PC-9 (cell line): ENCODE measurements at regions of chr11 and their contacts with region 1.

Region 1: GRCh38 chr11:64846998-64847666 is 2.7 kb upstream of the CDC42BPG start:
- DNase-seq: peak; percentile 83 to 95
- H3K4me3 ChIP-seq: no peak overlapping the region
- H3K27ac ChIP-seq: no peak overlapping the region
- H3K4me1 ChIP-seq: peaks cover 70% of the 10 kb centered on the region
- H3K27me3 ChIP-seq: no peaks in the 10 kb centered on the region
- CTCF ChIP-seq: peak; percentile 98

Region 2: GRCh38 chr11:64358907-64359711 is 488.0 kb before region 1 on chr11 and contains the start of gene RPS6KA4:
- CTCF ChIA-PET with region 1: no interaction called
- POLR2A ChIA-PET with region 1: no interaction called
- intact Hi-C with region 1: loop called (anchors 2 kb)
- DNase-seq: peak; percentile 54 to 79
- H3K4me3 ChIP-seq: peak within 1 kb of the TSS; percentile 91
- H3K27ac ChIP-seq: peak within 1 kb of the TSS; percentile 59
- H3K4me1 ChIP-seq: peaks cover 42% of the 10 kb centered on the region
- H3K27me3 ChIP-seq: no peaks in the 10 kb centered on the region
- CTCF ChIP-seq: no peak
- total RNA-seq, gene RPS6KA4: 60.6 and 64.3 TPM in 2 replicates

Region 3: GRCh38 chr11:64803163-64803845 is 43.8 kb before region 1 on chr11 and contains the start of gene MAP4K2:
- CTCF ChIA-PET with region 1: interaction called, 5 read pairs
- POLR2A ChIA-PET with region 1: no interaction called
- intact Hi-C with region 1: loop called (anchors 1 kb)
- DNase-seq: peak; percentile 72 to 93
- H3K4me3 ChIP-seq: peak within 1 kb of the TSS; percentile 76
- H3K27ac ChIP-seq: peak within 1 kb of the TSS; percentile 69
- H3K4me1 ChIP-seq: peaks cover 20% of the 10 kb centered on the region
- H3K27me3 ChIP-seq: no peaks in the 10 kb centered on the region
- CTCF ChIP-seq: peak; percentile 47; the same call in 1 of the 2 replicates
- total RNA-seq, gene MAP4K2: 32.6 and 34.3 TPM in 2 replicates

Region 4: GRCh38 chr11:64887757-64888405 is 40.7 kb after region 1 on chr11:
- CTCF ChIA-PET with region 1: interaction called, 13 read pairs
- POLR2A ChIA-PET with region 1: interaction called, 3 read pairs
- intact Hi-C with region 1: no loop called
- DNase-seq: peak in 1 of 2 experiments; percentile 87
- H3K4me3 ChIP-seq: peak overlapping the region; percentile 41; the same call in 1 of the 2 replicates
- H3K27ac ChIP-seq: no peak overlapping the region
- H3K4me1 ChIP-seq: peaks cover 24% of the 10 kb centered on the region
- H3K27me3 ChIP-seq: no peaks in the 10 kb centered on the region
- CTCF ChIP-seq: peak; percentile 99

Region 5: GRCh38 chr11:64947208-64947814 is 100.2 kb after region 1 on chr11:
- CTCF ChIA-PET with region 1: no interaction called
- POLR2A ChIA-PET with region 1: no interaction called
- intact Hi-C with region 1: no loop called
- DNase-seq: no peak
- H3K4me3 ChIP-seq: no peak overlapping the region
- H3K27ac ChIP-seq: no peak overlapping the region
- H3K4me1 ChIP-seq: no peaks in the 10 kb centered on the region
- H3K27me3 ChIP-seq: no peaks in the 10 kb centered on the region
- CTCF ChIP-seq: no peak

Region 6: GRCh38 chr11:65013692-65014145 is 166.6 kb after region 1 on chr11:
- CTCF ChIA-PET with region 1: interaction called, 3 read pairs
- POLR2A ChIA-PET with region 1: interaction called, 3 read pairs
- intact Hi-C with region 1: loop called (anchors 2 kb)
- DNase-seq: peak in 1 of 2 experiments; percentile 80
- H3K4me3 ChIP-seq: peak overlapping the region; percentile 76
- H3K27ac ChIP-seq: peak overlapping the region; percentile 71
- H3K4me1 ChIP-seq: peaks cover 14% of the 10 kb centered on the region
- H3K27me3 ChIP-seq: no peaks in the 10 kb centered on the region
- CTCF ChIP-seq: peak; percentile 75

Region 7: GRCh38 chr11:65180877-65181568 is 333.9 kb after region 1 on chr11:
- CTCF ChIA-PET with region 1: no interaction called
- POLR2A ChIA-PET with region 1: no interaction called
- intact Hi-C with region 1: loop called (anchors 5 kb)
- DNase-seq: peak; percentile 70 to 84
- H3K4me3 ChIP-seq: peak overlapping the region; percentile 97
- H3K27ac ChIP-seq: peak overlapping the region; percentile 44
- H3K4me1 ChIP-seq: peaks cover 32% of the 10 kb centered on the region
- H3K27me3 ChIP-seq: no peaks in the 10 kb centered on the region
- CTCF ChIP-seq: peak; percentile 77